Gastrocnemius medialis (tissue), 4 donors: ENCODE measurements at regions of chr5 and their contacts with region 1.

Region 1: GRCh38 chr5:1344975-1345838 is at the start of gene CLPTM1L:
- DNase-seq: peak; percentile 74 to 78
- ATAC-seq: peak; percentile 91 to 95
- H3K4me3 ChIP-seq: peak within 1 kb of the TSS; percentile 72 to 99 (median 82)
- H3K27ac ChIP-seq: peak within 1 kb of the TSS; percentile 82 to 96 (median 86)
- H3K4me1 ChIP-seq: peaks cover 16 to 18% of the 10 kb centered on the region in 2 donors
- H3K27me3 ChIP-seq: no peaks in the 10 kb centered on the region
- CTCF ChIP-seq: peak in 4 of 5 experiments; percentile 6 to 24 (median 19)
- POLR2A ChIP-seq: peak; percentile 81 to 85
- total RNA-seq, gene CLPTM1L: 29.4 to 41.0 (median 36.8) TPM

Region 2: GRCh38 chr5:892394-893136 is 452.6 kb before region 1 on chr5 and contains the starts of genes BRD9 and TRIP13:
- in situ Hi-C with region 1: no loop called
- intact Hi-C with region 1: loop called (anchors 10 kb)
- DNase-seq: peak; percentile 52 to 68
- ATAC-seq: peak; percentile 92 to 95
- H3K4me3 ChIP-seq: peak within 1 kb of the TSS; percentile 73 to 88 (median 78)
- H3K27ac ChIP-seq: peak within 1 kb of the TSS; percentile 83 to 96 (median 92)
- H3K4me1 ChIP-seq: peaks cover 15 to 16% of the 10 kb centered on the region in 2 donors
- H3K27me3 ChIP-seq: no peaks in the 10 kb centered on the region
- CTCF ChIP-seq: no peak
- POLR2A ChIP-seq: peak in 1 of 2 donors; percentile 57
- total RNA-seq, gene BRD9: 20.3 to 28.8 (median 22.2) TPM
- total RNA-seq, gene TRIP13: 0.41 to 1.6 (median 0.50) TPM

Region 3: DNA sequence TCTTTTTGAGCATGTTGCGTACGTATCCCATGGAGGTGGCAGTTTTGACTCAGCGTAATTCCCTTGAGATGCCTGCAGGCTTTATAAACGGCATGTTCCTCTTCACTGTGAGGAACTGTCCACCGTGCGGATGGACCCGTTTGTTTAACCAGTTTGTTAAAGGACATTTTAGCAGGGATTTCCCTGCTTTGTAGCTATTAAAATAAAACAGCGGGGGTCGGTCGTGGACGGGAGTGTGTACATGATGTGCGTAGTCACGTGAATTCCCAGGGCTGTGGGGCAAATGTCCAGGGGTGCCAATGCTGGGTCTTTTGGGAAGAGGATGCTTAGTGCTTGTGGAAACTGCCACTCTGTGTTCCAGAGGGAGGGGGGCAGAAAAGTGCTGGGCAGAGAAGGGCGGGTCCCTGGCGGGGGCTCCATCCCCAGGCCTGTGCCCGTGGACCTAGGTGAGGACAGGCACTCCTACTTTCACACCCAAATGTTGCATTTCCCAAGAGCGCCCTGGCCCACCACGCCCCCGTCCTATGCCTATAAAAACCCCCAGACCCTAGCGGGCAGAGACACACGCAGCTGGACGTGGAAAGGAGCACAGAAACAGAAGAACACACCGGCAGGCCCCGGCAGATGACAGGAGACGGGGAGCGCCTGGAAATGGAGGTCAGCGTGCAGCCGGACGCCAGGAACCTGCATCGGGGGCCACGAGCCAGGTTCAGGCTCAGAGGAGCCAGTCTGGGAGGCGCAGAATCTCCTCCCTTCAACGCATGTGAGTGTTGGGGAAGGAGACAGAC is 46.3 kb before region 1 on chr5:
- in situ Hi-C with region 1: no loop called
- intact Hi-C with region 1: no loop called
- DNase-seq: no peak
- ATAC-seq: no peak
- H3K4me3 ChIP-seq: no peak overlapping the region
- H3K27ac ChIP-seq: no peak overlapping the region
- H3K4me1 ChIP-seq: no peaks in the 10 kb centered on the region
- H3K27me3 ChIP-seq: peaks cover 9 to 26% (median 22%) of the 10 kb centered on the region in 3 donors
- CTCF ChIP-seq: no peak
- POLR2A ChIP-seq: no peak

Region 4: DNA sequence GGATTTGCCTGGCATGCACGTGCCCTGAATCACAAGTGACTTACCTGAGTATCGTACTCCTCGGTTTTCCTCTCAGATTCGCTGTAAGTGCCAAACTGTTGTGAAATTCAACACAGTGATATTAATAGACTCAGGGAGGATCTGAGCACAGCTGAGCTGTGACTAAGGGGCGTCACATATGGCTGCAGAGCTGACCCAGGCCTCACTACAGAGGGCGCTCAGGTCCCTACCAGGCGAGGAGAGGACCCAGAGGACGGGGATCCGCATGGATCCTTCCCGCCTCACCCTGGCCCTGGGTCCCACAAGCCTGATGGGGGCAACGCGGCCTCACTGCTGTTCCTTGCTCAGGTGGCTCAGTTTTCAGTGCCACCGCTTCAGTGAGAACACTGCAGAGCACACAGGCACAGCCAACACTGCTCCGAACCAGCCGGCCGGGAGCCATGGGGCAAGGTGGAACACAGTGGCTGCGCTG is 20.5 kb before region 1 on chr5:
- in situ Hi-C with region 1: no loop called
- intact Hi-C with region 1: loop called (anchors 1 kb)
- DNase-seq: peak; percentile 64 to 75
- ATAC-seq: peak; percentile 99 to 100
- H3K4me3 ChIP-seq: no peak overlapping the region
- H3K27ac ChIP-seq: peak overlapping the region; percentile 79 to 85 (median 84)
- H3K4me1 ChIP-seq: peaks cover 7 to 12% of the 10 kb centered on the region in 2 donors
- H3K27me3 ChIP-seq: no peaks in the 10 kb centered on the region
- CTCF ChIP-seq: no peak
- POLR2A ChIP-seq: peak in 1 of 2 donors; percentile 38

Region 5: GRCh38 chr5:1633605-1634336 is 288.6 kb after region 1 on chr5:
- in situ Hi-C with region 1: no loop called
- intact Hi-C with region 1: loop called (anchors 5 kb)
- DNase-seq: peak; percentile 65 to 73
- ATAC-seq: peak; percentile 94 to 99
- H3K4me3 ChIP-seq: peak overlapping the region; percentile 72 to 93 (median 76)
- H3K27ac ChIP-seq: peak overlapping the region; percentile 58 to 91 (median 86)
- H3K4me1 ChIP-seq: peaks cover 0 to 5% of the 10 kb centered on the region in 2 donors
- H3K27me3 ChIP-seq: no peaks in the 10 kb centered on the region
- CTCF ChIP-seq: no peak
- POLR2A ChIP-seq: peak; percentile 52 to 76

Region 6: GRCh38 chr5:1799602-1800471 is 454.6 kb after region 1 on chr5 and contains the start of gene MRPL36:
- in situ Hi-C with region 1: no loop called
- intact Hi-C with region 1: loop called (anchors 2 kb)
- DNase-seq: peak; percentile 88 to 91
- ATAC-seq: peak; percentile 79 to 83
- H3K4me3 ChIP-seq: peak within 1 kb of the TSS; percentile 84 to 99 (median 98)
- H3K27ac ChIP-seq: peak within 1 kb of the TSS; percentile 90 to 98 (median 92)
- H3K4me1 ChIP-seq: peaks cover 18 to 34% of the 10 kb centered on the region in 2 donors
- H3K27me3 ChIP-seq: no peaks in the 10 kb centered on the region
- CTCF ChIP-seq: no peak
- POLR2A ChIP-seq: peak; percentile 88 to 89
- total RNA-seq, gene MRPL36: 67.8 to 106 (median 75.3) TPM